Activated CD8-positive, alpha-beta T cell treated with anti-CD3 and anti-CD28 coated beads, Interleukin-2, amount 10 ng/mL, durations not matched to agents 7 days and 5 days (primary cell): ENCODE measurements at regions of chr17 and their contacts with region 1.

Region 1: GRCh38 chr17:82414548-82415281 is 3.4 kb upstream of the HEXD start:
- DNase-seq: peak; percentile 84
- ATAC-seq: peak; percentile 32
- H3K4me3 Mint-ChIP-seq: no peak overlapping the region
- H3K27ac Mint-ChIP-seq: no peak overlapping the region
- H3K4me1 Mint-ChIP-seq: peaks cover 19% of the 10 kb centered on the region
- H3K27me3 Mint-ChIP-seq: no peaks in the 10 kb centered on the region

Region 2: DNA sequence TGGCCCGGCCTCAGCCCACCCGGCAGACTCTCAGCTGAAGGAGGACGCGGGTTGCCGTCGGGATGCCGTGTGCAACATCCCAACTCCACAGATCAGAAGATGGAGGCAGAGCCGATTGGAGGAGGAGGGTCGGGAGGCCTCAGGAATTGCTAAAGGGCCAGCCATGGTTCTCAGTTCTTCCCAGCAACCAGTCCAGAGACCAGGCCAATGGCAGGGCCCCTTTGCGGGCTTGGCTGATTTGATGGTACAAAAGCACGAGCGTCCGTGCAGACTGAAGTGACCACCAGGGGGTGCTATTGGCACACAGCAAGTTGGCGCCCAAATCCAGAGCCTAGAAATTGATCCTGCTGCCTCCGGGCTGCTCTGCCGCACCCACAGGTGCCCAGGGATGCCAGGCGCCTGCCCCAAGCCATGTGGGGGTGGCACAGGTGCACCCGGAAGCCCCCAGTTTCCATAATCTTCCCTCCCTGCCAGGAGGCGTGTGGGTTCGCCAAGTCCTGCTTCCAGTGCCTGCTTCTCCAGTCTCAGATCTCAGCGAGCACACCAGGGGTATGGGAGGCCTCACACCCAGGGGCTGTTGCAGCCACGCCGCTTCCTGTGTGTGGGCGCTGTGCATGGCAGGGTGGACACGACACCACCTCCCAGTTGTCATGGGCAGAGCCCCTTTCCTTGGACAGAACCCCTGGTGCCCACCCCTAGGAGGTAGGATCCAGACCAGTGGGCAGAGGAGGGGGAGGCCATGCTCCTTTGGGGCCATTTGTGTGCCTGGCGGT is 62.8 kb before region 1 on chr17:
- CTCF ChIA-PET with region 1: interaction called, 19 read pairs
- POLR2A ChIA-PET with region 1: interaction called, 5 read pairs
- DNase-seq: peak; percentile 90
- ATAC-seq: peak; percentile 87
- H3K4me3 Mint-ChIP-seq: no peak overlapping the region
- H3K27ac Mint-ChIP-seq: no peak overlapping the region
- H3K4me1 Mint-ChIP-seq: peaks cover 2% of the 10 kb centered on the region
- H3K27me3 Mint-ChIP-seq: peaks cover 8% of the 10 kb centered on the region

Region 3: GRCh38 chr17:82358465-82359350 is 56.0 kb before region 1 on chr17 and contains the start of gene TEX19:
- CTCF ChIA-PET with region 1: interaction called, 11 read pairs
- POLR2A ChIA-PET with region 1: no interaction called
- DNase-seq: peak; percentile 35
- ATAC-seq: no peak
- H3K4me3 Mint-ChIP-seq: no peak within 1 kb of the TSS
- H3K27ac Mint-ChIP-seq: no peak within 1 kb of the TSS
- H3K4me1 Mint-ChIP-seq: peaks cover 9% of the 10 kb centered on the region
- H3K27me3 Mint-ChIP-seq: peaks cover 23% of the 10 kb centered on the region
- total RNA-seq, gene TEX19: not detected

Region 4: DNA sequence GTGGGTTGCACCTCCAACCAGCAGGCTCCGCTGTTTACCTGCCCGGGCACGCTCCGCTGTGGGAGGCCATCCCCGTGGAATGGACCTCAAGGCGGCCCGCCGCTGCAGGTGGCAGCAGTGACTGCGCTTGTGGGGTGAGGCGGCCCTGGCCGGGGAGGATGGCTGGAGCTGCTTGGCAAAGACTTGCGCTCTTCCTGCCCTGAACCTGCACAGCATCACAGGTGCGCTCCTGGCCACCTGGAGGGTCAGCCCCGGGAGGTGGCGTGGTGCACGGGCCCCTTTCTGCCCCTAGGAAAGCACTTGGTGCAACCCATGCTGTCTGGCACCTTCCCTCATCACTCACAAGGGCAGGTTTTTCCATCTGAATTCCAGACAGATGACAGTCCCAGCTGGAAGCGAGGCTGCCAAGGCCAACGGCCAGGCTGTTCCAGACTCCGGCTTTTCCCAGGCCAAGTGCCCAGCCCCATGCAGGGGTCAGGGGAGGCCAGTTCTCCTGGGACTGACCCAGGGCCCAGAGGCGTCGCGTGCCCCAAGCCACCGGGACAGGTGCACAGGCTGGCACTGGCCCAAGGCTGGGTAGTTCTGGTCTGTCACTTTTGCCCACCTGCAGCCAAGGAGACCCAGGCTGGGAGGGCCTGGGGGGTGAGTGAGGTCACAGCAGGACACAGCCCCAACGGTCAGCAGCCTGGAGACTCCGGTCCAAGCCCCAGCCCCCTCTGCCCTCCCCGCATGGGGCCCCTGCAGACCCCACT is 29.8 kb before region 1 on chr17:
- CTCF ChIA-PET with region 1: no interaction called
- POLR2A ChIA-PET with region 1: no interaction called
- DNase-seq: no peak
- ATAC-seq: no peak
- H3K4me3 Mint-ChIP-seq: no peak overlapping the region
- H3K27ac Mint-ChIP-seq: no peak overlapping the region
- H3K4me1 Mint-ChIP-seq: no peaks in the 10 kb centered on the region
- H3K27me3 Mint-ChIP-seq: peaks cover 13% of the 10 kb centered on the region

Region 5: GRCh38 chr17:82463925-82464566 is 49.3 kb after region 1 on chr17:
- CTCF ChIA-PET with region 1: no interaction called
- POLR2A ChIA-PET with region 1: no interaction called
- DNase-seq: no peak
- ATAC-seq: no peak
- H3K4me3 Mint-ChIP-seq: no peak overlapping the region
- H3K27ac Mint-ChIP-seq: peak overlapping the region; percentile 46
- H3K4me1 Mint-ChIP-seq: peaks cover 23% of the 10 kb centered on the region
- H3K27me3 Mint-ChIP-seq: no peaks in the 10 kb centered on the region

Region 6: DNA sequence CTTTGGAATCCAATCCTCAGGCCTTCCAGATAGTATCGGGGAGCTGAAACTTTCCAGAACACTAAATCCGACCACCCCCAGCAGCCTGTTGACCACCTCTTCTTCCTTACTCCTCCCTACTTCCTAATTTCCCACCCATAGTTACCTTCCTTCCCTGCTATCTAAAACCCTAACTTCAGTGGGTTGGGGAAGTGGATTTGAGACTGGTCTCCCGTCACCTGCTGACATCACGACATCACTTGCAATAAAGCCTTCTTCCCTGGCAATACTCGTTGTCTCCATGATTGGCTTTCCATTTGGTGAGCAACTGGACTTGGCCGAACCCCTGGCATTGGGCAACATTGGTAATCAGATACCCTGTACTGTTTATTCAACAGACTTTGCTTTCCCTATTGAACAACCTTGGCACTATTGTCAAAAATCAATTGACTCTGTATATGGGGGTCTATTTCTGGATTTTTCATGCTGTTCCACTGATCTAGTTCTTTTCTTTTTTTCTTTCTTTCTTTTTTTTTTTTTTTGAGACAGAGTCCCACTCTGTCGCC is 93.0 kb after region 1 on chr17:
- CTCF ChIA-PET with region 1: no interaction called
- POLR2A ChIA-PET with region 1: no interaction called
- DNase-seq: no peak
- ATAC-seq: no peak
- H3K4me3 Mint-ChIP-seq: no peak overlapping the region
- H3K27ac Mint-ChIP-seq: no peak overlapping the region
- H3K4me1 Mint-ChIP-seq: peaks cover 7% of the 10 kb centered on the region
- H3K27me3 Mint-ChIP-seq: no peaks in the 10 kb centered on the region